ENCODE measurements at regions of chr9 and their contacts with region 1.

Region 1: DNA sequence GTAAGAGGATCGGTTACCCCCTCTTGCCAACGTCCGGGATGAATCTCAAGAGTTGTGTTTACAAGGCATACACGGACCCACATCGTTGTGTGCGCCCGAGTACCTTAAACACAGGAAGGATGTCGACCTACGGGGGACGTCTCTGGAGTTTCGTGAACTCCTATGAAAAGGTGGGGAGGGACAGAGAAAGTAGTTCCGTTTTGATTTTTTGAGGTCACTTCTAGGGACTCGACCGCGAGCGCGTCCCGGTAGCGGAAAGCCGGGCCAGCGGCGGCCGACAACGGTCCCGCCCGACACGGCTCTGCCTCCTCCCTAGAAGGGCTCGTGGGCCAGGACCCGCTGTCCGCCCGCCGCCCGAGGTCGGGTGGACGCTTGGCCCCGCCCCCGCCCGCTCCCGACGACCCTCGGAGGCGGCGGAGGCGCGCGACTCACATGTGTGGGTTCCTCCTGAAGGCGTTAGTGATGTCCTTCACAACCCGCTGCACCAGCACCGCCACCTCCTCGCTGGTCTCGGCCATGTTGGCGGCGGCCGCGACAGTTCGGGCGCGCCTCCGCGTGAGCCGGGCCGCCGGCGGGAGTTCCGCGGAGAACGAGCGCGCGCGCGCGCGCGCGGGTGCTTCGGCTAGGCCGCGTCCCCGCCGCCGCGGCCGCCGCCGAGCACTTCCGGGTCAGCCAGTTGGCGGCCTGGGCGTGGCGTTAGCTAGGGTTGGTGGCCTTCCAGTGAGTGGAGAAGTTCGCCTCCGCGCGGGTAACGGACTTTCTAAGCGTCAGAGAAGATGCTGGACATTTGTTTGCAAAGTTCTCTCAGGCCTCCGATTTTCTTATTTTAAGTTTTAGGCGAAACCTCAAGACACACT is at the start of gene PTAR1:
- DNase-seq: peak; percentile 78 to 86
- ATAC-seq: peak; percentile 92 to 94
- H3K4me3 ChIP-seq: peak within 1 kb of the TSS; percentile 75 to 87 (median 77)
- H3K27ac ChIP-seq: peak within 1 kb of the TSS; percentile 92 to 98 (median 94)
- H3K4me1 ChIP-seq: peaks cover 30 to 39% of the 10 kb centered on the region in 2 donors
- H3K27me3 ChIP-seq: no peaks in the 10 kb centered on the region
- CTCF ChIP-seq: peak in 1 of 5 experiments; percentile 31
- POLR2A ChIP-seq: peak; percentile 74 to 79
- total RNA-seq, gene PTAR1: 26.5 to 52.4 (median 40.6) TPM

Region 2: GRCh38 chr9:69174616-69175463 is 584.8 kb before region 1 on chr9:
- in situ Hi-C with region 1: no loop called
- intact Hi-C with region 1: loop called (anchors 10 kb)
- DNase-seq: peak; percentile 41 to 55
- ATAC-seq: peak; percentile 58 to 83
- H3K4me3 ChIP-seq: peak overlapping the region; percentile 70 to 89 (median 85)
- H3K27ac ChIP-seq: peak overlapping the region; percentile 83 to 93 (median 85)
- H3K4me1 ChIP-seq: peaks cover 5 to 10% of the 10 kb centered on the region in 2 donors
- H3K27me3 ChIP-seq: no peaks in the 10 kb centered on the region
- CTCF ChIP-seq: no peak
- POLR2A ChIP-seq: peak; percentile 18 to 54

Region 3: DNA sequence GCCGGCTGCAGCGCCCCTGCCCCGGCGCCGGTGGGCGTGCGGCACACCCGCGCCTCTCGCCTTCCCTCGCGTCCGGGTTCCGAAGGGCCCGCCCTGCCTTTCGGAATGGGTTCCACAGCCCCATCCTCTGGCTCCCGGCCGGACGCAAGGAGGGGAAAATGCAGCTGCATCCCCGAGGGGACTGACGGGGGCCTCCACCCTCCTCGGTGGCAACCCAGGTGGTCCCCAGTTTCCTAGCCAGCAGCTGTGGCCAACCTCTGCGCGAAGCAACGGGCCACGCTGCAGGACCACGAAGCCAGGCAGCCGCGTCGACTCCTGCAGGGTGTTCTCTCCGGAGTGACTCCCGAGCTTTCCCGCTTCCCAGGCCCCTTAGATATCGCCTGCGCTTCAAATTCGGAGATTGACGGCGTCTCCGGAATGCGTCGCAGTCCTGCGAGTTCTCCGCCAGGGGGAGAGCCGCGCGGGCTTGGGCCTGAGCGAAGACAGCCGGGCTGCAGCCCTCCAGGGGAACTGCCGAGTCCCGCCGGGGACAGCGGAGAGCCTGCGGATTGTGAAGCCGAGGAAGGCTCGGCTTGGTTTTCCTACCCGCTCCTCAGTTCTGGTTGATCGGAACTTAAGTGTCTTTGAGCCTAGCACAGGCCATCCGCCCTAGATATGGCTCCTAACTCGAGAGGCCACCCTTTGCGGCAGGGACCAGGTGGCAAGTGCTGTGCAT is 86.9 kb before region 1 on chr9:
- in situ Hi-C with region 1: no loop called
- intact Hi-C with region 1: loop called (anchors 1 kb)
- DNase-seq: peak; percentile 57 to 63
- ATAC-seq: peak; percentile 85 to 91
- H3K4me3 ChIP-seq: peak overlapping the region; percentile 75 to 85 (median 78)
- H3K27ac ChIP-seq: peak overlapping the region; percentile 60 to 76 (median 66)
- H3K4me1 ChIP-seq: peaks cover 6 to 20% of the 10 kb centered on the region in 2 donors
- H3K27me3 ChIP-seq: no peaks in the 10 kb centered on the region
- CTCF ChIP-seq: peak; percentile 58 to 91 (median 84)
- POLR2A ChIP-seq: no peak

Region 4: DNA sequence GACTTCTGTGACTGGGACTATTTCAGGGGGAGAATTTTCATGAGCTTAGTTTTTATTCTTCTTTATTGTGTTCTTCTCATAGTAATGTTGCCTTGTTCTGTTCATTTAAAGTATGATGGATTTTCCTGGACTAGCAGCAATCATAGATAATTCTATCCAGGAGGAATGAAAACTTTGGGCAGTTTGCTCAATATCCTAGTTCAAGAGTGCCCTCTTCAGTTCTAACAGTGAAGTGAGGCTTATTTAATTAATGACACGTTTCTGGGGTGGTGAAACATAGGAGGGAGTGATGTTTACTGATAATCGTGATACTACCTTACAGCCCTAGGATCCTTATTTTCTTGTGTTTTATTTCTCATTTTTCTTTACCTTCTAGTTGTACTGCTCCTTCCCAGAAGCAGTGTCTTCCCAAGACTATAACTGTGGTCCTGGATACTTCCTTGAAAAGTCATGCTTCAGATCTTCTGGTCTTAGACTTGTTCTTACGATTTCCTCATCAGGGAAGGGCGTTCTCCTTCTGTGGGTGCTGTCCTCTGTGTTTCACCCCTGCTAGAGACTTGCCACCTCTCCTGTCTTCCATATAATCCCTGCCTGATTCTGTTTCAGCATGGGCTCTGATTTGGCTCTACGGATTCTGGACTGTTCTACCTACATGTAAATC is 118.3 kb after region 1 on chr9:
- in situ Hi-C with region 1: no loop called
- intact Hi-C with region 1: loop called (anchors 5 kb)
- DNase-seq: no peak
- ATAC-seq: peak in 1 of 2 donors; percentile 72
- H3K4me3 ChIP-seq: no peak overlapping the region
- H3K27ac ChIP-seq: no peak overlapping the region
- H3K4me1 ChIP-seq: peaks cover 20% of the 10 kb centered on the region in 2 donors
- H3K27me3 ChIP-seq: no peaks in the 10 kb centered on the region
- CTCF ChIP-seq: peak in 4 of 5 experiments; percentile 37 to 56 (median 44)
- POLR2A ChIP-seq: no peak

Measured in gastrocnemius medialis (tissue), 4 donors.